MCF 10A (cell line): ENCODE measurements at regions of chrX and their contacts with region 1.

Region 1: DNA sequence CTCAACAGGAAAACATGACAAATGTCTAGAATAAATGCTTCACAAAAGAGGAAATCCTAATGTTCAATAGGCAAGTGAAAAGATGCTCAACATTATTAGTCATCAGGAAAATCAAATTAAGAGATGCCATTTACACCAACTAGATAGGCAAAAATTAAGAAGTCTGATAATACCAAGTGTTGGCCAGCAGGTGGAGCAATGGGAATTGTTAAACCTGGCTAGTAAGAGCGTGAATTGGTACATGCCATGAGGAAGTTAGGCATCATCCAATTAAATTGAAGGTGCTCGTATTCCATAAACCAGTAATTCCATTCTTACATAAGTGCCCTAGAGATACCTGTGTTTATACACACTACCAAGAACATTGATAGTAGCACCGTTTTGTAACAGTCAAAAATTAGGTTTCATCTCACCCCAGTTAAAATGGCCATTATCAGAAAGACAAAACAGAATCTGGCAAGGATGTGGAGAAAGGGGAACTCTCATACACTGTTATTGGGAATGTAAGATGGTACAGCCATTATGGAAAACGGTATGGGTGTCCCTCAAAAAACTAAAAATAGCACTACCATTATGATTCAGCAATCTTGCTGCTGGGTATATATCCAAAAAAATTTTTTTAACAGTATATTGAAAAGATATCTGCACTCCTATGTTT is 14.0 kb upstream of the ZCCHC18 start:
- DNase-seq: peak; percentile 80
- H3K4me3 Mint-ChIP-seq: no peak overlapping the region
- H3K27ac Mint-ChIP-seq: no peak overlapping the region
- H3K4me1 Mint-ChIP-seq: no peaks in the 10 kb centered on the region
- H3K27me3 Mint-ChIP-seq: peaks cover 77% of the 10 kb centered on the region
- CTCF ChIP-seq: peak; percentile 52

Region 2: DNA sequence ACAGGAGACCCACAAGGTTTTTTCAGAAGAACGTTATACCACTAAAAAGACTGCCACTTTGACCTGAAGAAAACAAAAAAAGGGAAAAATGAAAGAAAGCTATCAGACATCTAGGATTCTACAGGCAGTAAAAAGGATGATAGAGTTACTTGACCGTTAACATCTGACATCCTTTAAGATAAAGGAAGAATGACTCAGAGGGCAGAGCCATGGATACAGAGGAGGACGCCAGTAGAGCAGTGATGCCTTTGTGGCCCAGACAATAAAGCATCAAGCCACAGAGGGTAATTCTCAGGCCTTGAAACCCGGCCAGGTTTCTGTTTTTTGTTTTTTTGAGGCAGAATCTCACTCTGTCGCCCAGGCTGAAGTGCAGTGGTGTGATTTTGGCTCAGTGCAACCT is 1024.8 kb before region 1 on chrX:
- CTCF ChIA-PET with region 1: no interaction called
- POLR2A ChIA-PET with region 1: no interaction called
- intact Hi-C with region 1: no loop called
- DNase-seq: no peak
- H3K4me3 Mint-ChIP-seq: no peak overlapping the region
- H3K27ac Mint-ChIP-seq: no peak overlapping the region
- H3K4me1 Mint-ChIP-seq: no peaks in the 10 kb centered on the region
- H3K27me3 Mint-ChIP-seq: peaks cover 64% of the 10 kb centered on the region
- CTCF ChIP-seq: no peak

Region 3: DNA sequence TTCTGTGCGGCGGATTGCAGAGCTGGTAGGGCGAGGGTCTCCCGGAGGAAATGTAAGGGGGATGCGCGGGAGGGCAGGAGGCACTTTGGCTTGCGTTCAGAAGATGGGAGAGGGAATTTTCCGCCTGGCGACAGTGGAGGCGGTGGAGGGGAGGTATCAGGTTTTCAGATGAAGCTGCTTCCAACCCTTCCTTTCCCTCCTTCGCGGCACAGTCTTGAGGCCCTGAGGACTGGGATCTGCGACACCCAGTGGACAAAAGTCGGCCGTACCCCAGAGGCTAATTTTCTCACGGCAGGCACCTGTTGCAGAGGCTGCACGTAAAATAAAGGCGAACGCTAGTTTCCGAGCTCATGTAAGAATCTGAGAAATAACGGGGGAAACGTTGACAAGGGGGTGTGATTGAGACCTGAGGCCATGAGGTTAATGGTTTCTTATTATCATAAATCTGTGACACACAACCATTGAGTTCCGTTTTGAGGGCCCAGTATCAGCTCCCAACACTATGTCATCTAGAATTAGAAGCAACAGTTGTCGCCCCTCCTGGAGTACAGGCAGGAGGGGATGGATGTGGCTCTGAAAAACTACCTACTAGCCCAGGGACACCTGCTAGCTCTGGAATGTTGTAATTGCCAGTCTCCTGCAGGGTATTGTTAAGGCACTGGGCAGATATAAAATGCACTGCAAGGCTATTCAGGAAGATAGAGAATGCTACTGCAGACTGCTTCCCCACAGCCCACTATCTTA is 15.1 kb after region 1 on chrX:
- CTCF ChIA-PET with region 1: interaction called, 11 read pairs
- POLR2A ChIA-PET with region 1: interaction called, 4 read pairs
- intact Hi-C with region 1: no loop called
- DNase-seq: peak; percentile 63
- H3K4me3 Mint-ChIP-seq: peak overlapping the region; percentile 76
- H3K27ac Mint-ChIP-seq: no peak overlapping the region
- H3K4me1 Mint-ChIP-seq: peaks cover 8% of the 10 kb centered on the region
- H3K27me3 Mint-ChIP-seq: peaks cover 80% of the 10 kb centered on the region
- CTCF ChIP-seq: peak; percentile 29

Region 4: DNA sequence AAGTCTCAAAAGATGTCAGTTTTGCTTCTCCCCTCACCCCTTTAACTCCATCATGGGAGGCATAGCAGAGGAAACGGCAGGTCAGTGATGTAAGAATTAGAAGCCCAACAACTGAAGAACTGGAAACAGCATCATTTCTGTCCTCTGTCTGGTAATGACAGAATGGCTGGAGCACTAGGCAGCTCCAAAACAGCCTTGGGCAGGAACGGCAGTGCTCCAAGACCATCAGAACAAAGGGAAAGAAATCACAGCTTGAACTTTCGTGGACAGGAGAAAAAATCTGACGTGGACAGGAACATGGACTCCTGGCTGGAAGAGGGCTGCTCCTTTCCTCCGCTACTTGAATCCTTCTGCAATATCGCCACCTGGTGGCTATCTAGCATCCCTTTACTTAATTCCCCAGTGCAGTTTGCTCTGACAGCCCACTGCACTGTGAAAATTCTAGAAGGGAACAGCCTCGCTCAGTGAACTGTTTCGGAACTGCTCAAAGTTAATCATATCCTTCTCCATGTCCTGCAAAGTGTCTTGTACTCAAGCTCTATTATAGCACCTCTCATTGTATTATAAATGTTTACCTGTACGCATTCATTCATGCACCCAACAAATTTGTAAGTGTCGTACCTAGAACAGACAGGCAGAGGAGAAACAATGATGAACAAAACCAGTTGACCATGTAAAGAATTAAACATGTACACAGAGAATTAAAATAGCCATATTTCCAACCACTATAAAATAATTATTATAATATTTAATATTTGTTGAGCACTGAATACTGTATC is 38.1 kb after region 1 on chrX:
- CTCF ChIA-PET with region 1: interaction called, 15 read pairs
- POLR2A ChIA-PET with region 1: no interaction called
- intact Hi-C with region 1: loop called (anchors 1 kb)
- DNase-seq: peak; percentile 83
- H3K4me3 Mint-ChIP-seq: peak overlapping the region; percentile 67
- H3K27ac Mint-ChIP-seq: no peak overlapping the region
- H3K4me1 Mint-ChIP-seq: no peaks in the 10 kb centered on the region
- H3K27me3 Mint-ChIP-seq: peaks cover 34% of the 10 kb centered on the region
- CTCF ChIP-seq: peak; percentile 60